CD4-positive, alpha-beta T cell (primary cell): ENCODE measurements at regions of chr6 and their contacts with region 1.

Region 1: DNA sequence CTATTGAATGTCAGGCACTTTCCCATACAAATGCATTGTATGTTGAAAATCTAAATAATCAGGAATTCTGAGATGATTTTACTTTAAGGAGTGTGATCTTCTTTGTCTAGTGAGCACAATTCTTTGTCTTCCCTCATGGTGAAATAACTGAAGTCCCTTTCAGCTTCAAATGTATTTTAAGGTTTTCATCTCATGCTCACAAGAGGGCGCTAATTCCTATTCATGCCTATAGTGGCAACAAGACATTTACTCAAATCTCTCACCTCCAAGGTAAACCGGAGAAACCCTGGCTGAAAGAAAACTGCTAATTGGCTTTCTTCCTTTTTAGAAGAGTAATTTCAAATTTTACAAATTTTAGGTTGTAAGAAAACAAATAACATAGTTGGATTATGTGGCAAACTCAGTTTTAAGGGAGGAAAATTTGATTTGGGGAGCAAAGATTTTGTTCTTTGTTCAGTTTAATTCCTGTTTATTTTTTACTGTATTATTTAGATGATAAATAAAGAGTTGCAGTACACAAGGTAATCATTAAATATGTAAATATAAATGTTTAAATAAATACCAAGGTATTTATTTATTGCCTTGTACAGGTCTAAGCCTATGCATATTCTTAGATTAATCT is 69.1 kb downstream of the SLC35F1 start:
- DNase-seq: peak in 3 of 14 experiments; percentile 44 to 52 (median 52)
- ATAC-seq: no peak
- H3K4me3 ChIP-seq: no peak overlapping the region
- H3K4me3 Mint-ChIP-seq: no peak overlapping the region
- H3K27ac ChIP-seq: no peak overlapping the region
- H3K27ac Mint-ChIP-seq: no peak overlapping the region
- H3K4me1 ChIP-seq: no peaks in the 10 kb centered on the region
- H3K4me1 Mint-ChIP-seq: no peaks in the 10 kb centered on the region
- H3K27me3 ChIP-seq: no peaks in the 10 kb centered on the region
- H3K27me3 Mint-ChIP-seq: peaks cover 19% of the 10 kb centered on the region
- CTCF ChIP-seq: peak; percentile 71

Region 2: DNA sequence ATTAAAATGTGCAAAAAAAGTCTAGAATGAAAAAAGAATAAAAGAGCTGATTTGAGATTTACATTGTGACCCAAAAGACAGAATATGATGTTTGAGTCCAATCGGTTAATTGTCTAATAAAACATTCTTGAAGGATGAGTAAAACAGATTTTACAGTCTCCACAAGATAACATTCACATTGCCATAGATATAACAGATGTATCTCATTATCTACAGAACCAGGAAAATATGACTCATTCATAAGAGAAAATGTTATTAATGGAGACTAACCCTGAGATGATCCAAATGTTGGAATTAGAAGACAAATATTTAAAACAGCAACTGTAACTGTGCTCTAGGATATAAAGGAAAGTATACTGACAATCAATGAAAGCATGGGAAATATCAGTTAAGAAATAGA is 957.4 kb before region 1 on chr6:
- CTCF ChIA-PET with region 1: no interaction called
- POLR2A ChIA-PET with region 1: no interaction called
- intact Hi-C with region 1: no loop called
- DNase-seq: no peak
- ATAC-seq: no peak
- H3K4me3 ChIP-seq: no peak overlapping the region
- H3K4me3 Mint-ChIP-seq: no peak overlapping the region
- H3K27ac ChIP-seq: no peak overlapping the region
- H3K27ac Mint-ChIP-seq: no peak overlapping the region
- H3K4me1 ChIP-seq: no peaks in the 10 kb centered on the region
- H3K4me1 Mint-ChIP-seq: no peaks in the 10 kb centered on the region
- H3K27me3 ChIP-seq: no peaks in the 10 kb centered on the region
- H3K27me3 Mint-ChIP-seq: no peaks in the 10 kb centered on the region
- CTCF ChIP-seq: no peak

Region 3: GRCh38 chr6:118551063-118552053 is 575.2 kb after region 1 on chr6:
- CTCF ChIA-PET with region 1: no interaction called
- POLR2A ChIA-PET with region 1: no interaction called
- intact Hi-C with region 1: loop called (anchors 1 to 5 kb)
- DNase-seq: peak in 4 of 14 experiments; percentile 42 to 70 (median 61)
- ATAC-seq: peak; percentile 96
- H3K4me3 ChIP-seq: no peak overlapping the region
- H3K4me3 Mint-ChIP-seq: no peak overlapping the region
- H3K27ac ChIP-seq: no peak overlapping the region
- H3K27ac Mint-ChIP-seq: peak overlapping the region; percentile 13
- H3K4me1 ChIP-seq: no peaks in the 10 kb centered on the region
- H3K4me1 Mint-ChIP-seq: peaks cover 56% of the 10 kb centered on the region
- H3K27me3 ChIP-seq: no peaks in the 10 kb centered on the region
- H3K27me3 Mint-ChIP-seq: no peaks in the 10 kb centered on the region
- CTCF ChIP-seq: peak; percentile 63

Region 4: DNA sequence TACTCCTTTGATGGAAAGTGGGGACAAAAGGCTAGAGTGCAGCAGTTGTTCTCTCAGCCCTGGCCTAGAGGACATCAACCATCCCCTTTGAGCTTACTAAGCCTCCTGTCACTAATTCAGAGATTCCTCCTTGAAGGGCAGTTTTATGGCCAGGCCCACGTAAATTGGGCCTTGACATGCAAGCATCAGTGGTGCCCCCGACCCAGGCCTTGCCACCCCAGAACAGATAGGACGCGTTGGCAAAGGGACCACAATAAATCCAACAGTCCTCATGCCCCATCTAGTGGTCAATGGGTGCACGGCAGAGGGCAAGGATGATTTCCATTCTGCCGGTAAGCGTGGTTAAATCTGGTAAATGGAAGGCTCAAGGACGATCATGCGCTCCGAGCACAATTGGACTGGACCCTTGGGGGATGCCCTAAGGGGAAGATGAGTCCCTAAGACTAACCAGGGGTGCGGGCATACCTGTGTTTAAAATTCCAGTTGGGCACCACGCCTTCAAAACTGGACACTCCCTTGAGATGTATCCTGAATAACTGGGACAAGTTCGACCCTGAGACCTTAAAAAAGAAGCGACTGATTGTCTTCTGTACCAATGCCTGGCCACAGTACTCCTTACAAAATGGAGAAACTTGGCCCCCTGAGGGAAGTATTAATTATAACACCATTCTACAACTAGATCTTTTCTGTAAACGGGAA is 642.7 kb after region 1 on chr6:
- CTCF ChIA-PET with region 1: no interaction called
- POLR2A ChIA-PET with region 1: no interaction called
- intact Hi-C with region 1: loop called in 1 of 2 experiments (anchors 10 kb)
- DNase-seq: peak; percentile 38 to 78 (median 64)
- ATAC-seq: peak; percentile 97
- H3K4me3 ChIP-seq: no peak overlapping the region
- H3K4me3 Mint-ChIP-seq: peak overlapping the region; percentile 9
- H3K27ac ChIP-seq: no peak overlapping the region
- H3K27ac Mint-ChIP-seq: peak overlapping the region; percentile 62
- H3K4me1 ChIP-seq: peaks cover 28% of the 10 kb centered on the region
- H3K4me1 Mint-ChIP-seq: peaks cover 86% of the 10 kb centered on the region
- H3K27me3 ChIP-seq: no peaks in the 10 kb centered on the region
- H3K27me3 Mint-ChIP-seq: no peaks in the 10 kb centered on the region
- CTCF ChIP-seq: peak; percentile 76